MCF 10A (cell line): ENCODE measurements at regions of chr6 and their contacts with region 1.

Region 1: DNA sequence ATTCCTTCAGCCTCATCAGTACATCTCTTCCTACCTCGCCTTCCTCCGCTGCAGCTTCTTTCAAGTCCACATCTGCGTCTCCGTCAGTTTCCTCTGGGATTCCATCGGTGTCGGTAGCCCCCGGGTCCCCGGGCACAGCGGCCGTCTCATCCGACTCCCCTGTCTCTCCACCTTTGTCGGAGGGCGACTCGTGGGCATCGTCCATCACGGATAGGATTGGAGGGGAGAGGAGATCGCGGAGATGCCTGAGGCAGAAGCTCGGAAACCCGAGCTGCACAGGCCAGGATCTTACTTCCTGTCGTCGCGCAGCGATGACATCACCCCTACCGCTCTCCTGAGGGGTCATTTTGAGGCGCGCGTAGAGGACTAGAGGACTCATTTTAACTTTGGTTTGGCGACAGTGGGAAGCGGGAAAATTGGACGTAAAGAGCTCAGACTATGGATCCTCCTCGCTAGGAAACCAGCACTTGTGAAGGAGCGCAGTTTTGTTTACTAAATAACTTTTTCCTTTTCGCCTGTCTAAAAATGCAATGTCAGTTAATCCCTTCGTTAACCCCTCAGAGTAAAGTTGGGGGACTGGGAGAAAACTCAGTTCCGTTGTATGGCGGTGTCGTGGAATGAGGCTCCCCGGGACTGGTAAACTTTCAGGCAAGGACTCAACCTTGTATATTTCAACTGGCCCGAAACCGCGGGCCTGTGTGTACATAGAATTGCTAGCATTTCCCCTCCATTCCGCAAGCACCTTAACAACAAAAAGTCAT is at the start of gene TAF11:
- DNase-seq: peak; percentile 94
- H3K4me3 Mint-ChIP-seq: peak within 1 kb of the TSS; percentile 99
- H3K27ac Mint-ChIP-seq: peak within 1 kb of the TSS; percentile 99
- H3K4me1 Mint-ChIP-seq: peaks cover 17% of the 10 kb centered on the region
- H3K27me3 Mint-ChIP-seq: no peaks in the 10 kb centered on the region
- CTCF ChIP-seq: no peak
- total RNA-seq, gene TAF11: 16.5 and 22.2 TPM in 2 replicates

Region 2: GRCh38 chr6:34425498-34426410 is 462.2 kb before region 1 on chr6 and contains the start of gene RPS10:
- CTCF ChIA-PET with region 1: no interaction called
- POLR2A ChIA-PET with region 1: interaction called, 10 read pairs
- intact Hi-C with region 1: no loop called
- DNase-seq: peak; percentile 89
- H3K4me3 Mint-ChIP-seq: peak within 1 kb of the TSS; percentile 96
- H3K27ac Mint-ChIP-seq: peak within 1 kb of the TSS; percentile 100
- H3K4me1 Mint-ChIP-seq: peaks cover 16% of the 10 kb centered on the region
- H3K27me3 Mint-ChIP-seq: no peaks in the 10 kb centered on the region
- CTCF ChIP-seq: no peak
- total RNA-seq, gene RPS10: 1,490 and 1,644 TPM in 2 replicates

Region 3: DNA sequence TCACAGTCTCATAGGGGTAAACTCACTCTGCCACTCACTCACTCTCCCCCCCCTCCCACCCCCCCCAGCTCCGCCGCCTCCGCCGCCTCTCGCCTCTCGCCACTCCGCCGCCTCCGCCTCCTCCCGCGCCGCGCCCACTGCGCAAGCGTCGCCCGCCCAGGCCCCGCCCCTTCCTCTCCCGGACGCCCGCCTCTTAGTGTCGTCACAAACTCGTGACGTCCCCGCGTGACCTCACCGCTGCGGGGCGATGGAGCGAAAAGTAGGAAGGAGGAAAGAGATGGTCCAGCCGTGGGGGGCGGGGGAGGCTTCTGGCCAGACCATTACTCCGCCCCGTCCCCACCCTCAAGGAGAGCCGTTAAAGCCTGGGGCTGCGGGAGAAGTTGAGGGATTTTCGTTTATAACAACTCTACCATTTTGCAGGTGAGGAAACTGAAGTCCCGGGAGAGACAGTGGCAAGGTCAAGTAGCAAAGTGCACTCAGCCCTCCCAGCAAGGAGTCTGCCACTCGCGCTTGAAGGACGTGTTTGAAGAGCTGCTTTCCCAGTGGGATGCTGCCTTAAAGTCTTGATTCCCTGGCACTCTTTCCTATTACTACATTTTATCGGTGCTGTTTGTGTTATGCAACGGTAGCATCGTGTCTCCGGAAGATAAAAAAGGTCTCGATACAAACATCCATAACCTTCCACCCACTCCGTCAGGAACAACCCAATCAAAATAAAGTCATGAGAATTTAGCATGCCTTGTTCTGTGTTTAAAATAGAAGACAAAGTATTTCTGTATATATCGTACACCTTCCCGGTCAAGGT is 191.0 kb before region 1 on chr6 and contains the start of gene ILRUN:
- CTCF ChIA-PET with region 1: no interaction called
- POLR2A ChIA-PET with region 1: interaction called, 21 read pairs
- intact Hi-C with region 1: no loop called
- DNase-seq: peak; percentile 93
- H3K4me3 Mint-ChIP-seq: peak within 1 kb of the TSS; percentile 81
- H3K27ac Mint-ChIP-seq: peak within 1 kb of the TSS; percentile 32
- H3K4me1 Mint-ChIP-seq: peaks cover 10% of the 10 kb centered on the region
- H3K27me3 Mint-ChIP-seq: no peaks in the 10 kb centered on the region
- CTCF ChIP-seq: no peak
- total RNA-seq, gene ILRUN: 49.2 and 50.8 TPM in 2 replicates

Region 4: DNA sequence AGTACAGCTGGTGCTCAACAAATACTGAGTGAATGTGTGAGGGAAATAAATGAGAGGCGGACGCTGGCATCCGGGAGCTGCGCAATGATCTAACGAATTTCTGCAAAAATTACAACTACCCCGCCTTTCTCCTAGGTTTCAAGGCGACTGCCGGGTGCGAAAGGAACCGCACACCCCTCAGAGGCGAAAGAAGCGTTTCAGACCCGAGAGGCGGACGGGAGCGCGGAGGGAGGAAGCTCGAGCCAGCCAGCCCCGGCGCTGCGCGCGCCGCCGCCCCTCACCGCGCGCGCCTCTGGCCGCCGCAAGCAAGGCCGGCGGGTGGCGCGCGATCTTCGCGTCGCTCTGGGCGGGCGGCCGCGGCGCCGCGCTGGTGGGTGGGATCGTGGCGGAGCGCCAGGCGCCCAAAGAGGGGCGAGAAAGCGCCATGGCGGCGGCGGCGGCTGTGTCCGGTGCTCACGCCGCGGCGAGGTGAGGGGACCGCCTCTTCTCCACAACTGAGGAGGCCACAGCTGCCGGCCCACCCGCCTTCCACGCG is 96.2 kb before region 1 on chr6 and contains the start of gene BLTP3A:
- CTCF ChIA-PET with region 1: interaction called, 3 read pairs
- POLR2A ChIA-PET with region 1: interaction called, 87 read pairs
- intact Hi-C with region 1: loop called (anchors 5 kb)
- DNase-seq: peak; percentile 56
- H3K4me3 Mint-ChIP-seq: peak within 1 kb of the TSS; percentile 97
- H3K27ac Mint-ChIP-seq: peak within 1 kb of the TSS; percentile 99
- H3K4me1 Mint-ChIP-seq: peaks cover 15% of the 10 kb centered on the region
- H3K27me3 Mint-ChIP-seq: no peaks in the 10 kb centered on the region
- CTCF ChIP-seq: no peak
- total RNA-seq, gene BLTP3A: 18.5 and 25.4 TPM in 2 replicates

Region 5: GRCh38 chr6:34872332-34872731 is 15.6 kb before region 1 on chr6:
- CTCF ChIA-PET with region 1: no interaction called
- POLR2A ChIA-PET with region 1: interaction called, 37 read pairs
- intact Hi-C with region 1: no loop called
- DNase-seq: no peak
- H3K4me3 Mint-ChIP-seq: no peak overlapping the region
- H3K27ac Mint-ChIP-seq: no peak overlapping the region
- H3K4me1 Mint-ChIP-seq: no peaks in the 10 kb centered on the region
- H3K27me3 Mint-ChIP-seq: no peaks in the 10 kb centered on the region
- CTCF ChIP-seq: no peak

Region 6: DNA sequence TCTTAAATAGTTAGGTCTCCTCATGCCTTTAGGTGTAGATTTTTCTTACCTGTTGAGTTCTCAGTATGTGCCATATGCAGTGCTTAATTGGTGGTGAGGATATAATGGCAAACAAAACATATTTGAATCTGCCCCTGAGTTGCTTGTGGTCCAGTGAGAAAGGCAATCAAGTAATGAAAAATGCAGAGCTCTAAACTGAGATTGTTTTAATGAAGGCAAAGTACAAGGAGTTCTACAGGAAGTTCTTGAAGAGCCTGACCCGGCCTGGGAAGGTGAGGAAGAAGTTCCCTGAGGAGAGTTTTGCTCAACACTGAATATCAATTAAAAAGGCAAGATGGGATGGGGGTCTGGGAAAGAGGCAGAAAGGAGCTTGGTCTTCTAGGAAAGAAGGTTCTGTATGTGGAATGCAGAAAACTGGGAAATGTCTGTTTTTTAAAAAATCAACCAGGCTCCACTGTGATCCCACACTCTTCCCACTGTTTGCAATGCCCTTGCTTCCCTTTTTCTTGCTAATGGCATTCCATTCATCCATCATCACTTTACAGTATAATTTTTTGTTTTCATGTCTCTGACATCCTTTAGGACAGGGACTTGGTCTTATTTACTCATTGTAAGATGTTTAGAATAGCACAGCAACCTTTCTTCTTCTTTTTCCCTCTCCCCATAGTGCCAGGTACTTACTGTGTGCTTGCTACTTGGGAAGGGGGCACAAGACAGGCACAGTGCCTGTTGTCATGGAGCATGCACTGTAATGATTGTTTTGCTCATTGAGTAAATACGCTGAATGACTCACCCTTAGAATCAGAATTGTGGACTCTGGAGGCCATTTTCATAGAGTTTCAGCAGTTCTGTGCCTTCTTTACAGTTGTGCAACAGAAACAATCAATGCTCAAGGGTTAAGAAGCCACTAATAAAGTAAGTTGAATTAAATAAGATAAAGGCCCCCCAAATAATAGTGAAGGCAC is 65.4 kb after region 1 on chr6:
- CTCF ChIA-PET with region 1: no interaction called
- POLR2A ChIA-PET with region 1: no interaction called
- intact Hi-C with region 1: loop called (anchors 2 kb)
- DNase-seq: peak; percentile 62
- H3K4me3 Mint-ChIP-seq: no peak overlapping the region
- H3K27ac Mint-ChIP-seq: peak overlapping the region; percentile 76
- H3K4me1 Mint-ChIP-seq: peaks cover 13% of the 10 kb centered on the region
- H3K27me3 Mint-ChIP-seq: no peaks in the 10 kb centered on the region
- CTCF ChIP-seq: no peak

Region 7: GRCh38 chr6:35259194-35259947 is 371.4 kb after region 1 on chr6 and contains the start of gene ZNF76:
- CTCF ChIA-PET with region 1: interaction called, 3 read pairs
- POLR2A ChIA-PET with region 1: interaction called, 22 read pairs
- intact Hi-C with region 1: no loop called
- DNase-seq: peak; percentile 97
- H3K4me3 Mint-ChIP-seq: peak within 1 kb of the TSS; percentile 88
- H3K27ac Mint-ChIP-seq: peak within 1 kb of the TSS; percentile 98
- H3K4me1 Mint-ChIP-seq: peaks cover 34% of the 10 kb centered on the region
- H3K27me3 Mint-ChIP-seq: no peaks in the 10 kb centered on the region
- CTCF ChIP-seq: no peak
- total RNA-seq, gene ZNF76: 28.0 and 28.4 TPM in 2 replicates